Activated naive CD8-positive, alpha-beta T cell treated with anti-CD3 and anti-CD28 coated beads, Interleukin-2, amount 10 ng/mL, durations not matched to agents 7 days and 5 days (primary cell): ENCODE measurements at regions of chr6 and their contacts with region 1.

Region 1: GRCh38 chr6:33547499-33547898 is 32.6 kb downstream of the BAK1 start:
- DNase-seq: no peak
- ATAC-seq: no peak
- H3K4me3 Mint-ChIP-seq: peak overlapping the region; percentile 34
- H3K27ac Mint-ChIP-seq: peak overlapping the region; percentile 79
- H3K4me1 Mint-ChIP-seq: peaks cover 21% of the 10 kb centered on the region
- H3K27me3 Mint-ChIP-seq: no peaks in the 10 kb centered on the region

Region 2: DNA sequence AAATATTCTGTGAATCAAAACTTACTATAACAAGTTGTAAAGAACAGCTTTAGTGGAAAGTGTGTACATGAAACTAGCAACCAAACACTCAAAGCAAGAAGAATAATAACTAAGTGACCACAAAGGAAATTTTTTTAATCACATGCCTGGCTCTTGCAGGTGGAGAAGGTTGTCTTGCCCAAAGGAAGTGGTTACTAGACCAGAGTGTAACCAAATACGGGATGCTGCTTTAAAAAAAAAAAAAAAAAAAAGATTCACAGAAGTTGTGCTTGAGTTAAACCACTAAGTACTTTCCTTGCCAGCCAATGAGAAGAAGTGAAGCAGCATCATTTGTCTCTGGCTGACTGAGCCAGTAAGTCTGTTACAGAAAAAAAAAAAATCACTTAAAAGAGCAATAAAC is 861.9 kb before region 1 on chr6:
- POLR2A ChIA-PET with region 1: no interaction called
- DNase-seq: no peak
- ATAC-seq: peak; percentile 95
- H3K4me3 Mint-ChIP-seq: peak overlapping the region; percentile 55
- H3K27ac Mint-ChIP-seq: peak overlapping the region; percentile 46
- H3K4me1 Mint-ChIP-seq: peaks cover 20% of the 10 kb centered on the region
- H3K27me3 Mint-ChIP-seq: peaks cover 12% of the 10 kb centered on the region

Region 3: GRCh38 chr6:33508935-33509926 is 38.3 kb before region 1 on chr6:
- POLR2A ChIA-PET with region 1: no interaction called
- DNase-seq: no peak
- ATAC-seq: no peak
- H3K4me3 Mint-ChIP-seq: no peak overlapping the region
- H3K27ac Mint-ChIP-seq: no peak overlapping the region
- H3K4me1 Mint-ChIP-seq: peaks cover 5% of the 10 kb centered on the region
- H3K27me3 Mint-ChIP-seq: peaks cover 18% of the 10 kb centered on the region

Region 4: DNA sequence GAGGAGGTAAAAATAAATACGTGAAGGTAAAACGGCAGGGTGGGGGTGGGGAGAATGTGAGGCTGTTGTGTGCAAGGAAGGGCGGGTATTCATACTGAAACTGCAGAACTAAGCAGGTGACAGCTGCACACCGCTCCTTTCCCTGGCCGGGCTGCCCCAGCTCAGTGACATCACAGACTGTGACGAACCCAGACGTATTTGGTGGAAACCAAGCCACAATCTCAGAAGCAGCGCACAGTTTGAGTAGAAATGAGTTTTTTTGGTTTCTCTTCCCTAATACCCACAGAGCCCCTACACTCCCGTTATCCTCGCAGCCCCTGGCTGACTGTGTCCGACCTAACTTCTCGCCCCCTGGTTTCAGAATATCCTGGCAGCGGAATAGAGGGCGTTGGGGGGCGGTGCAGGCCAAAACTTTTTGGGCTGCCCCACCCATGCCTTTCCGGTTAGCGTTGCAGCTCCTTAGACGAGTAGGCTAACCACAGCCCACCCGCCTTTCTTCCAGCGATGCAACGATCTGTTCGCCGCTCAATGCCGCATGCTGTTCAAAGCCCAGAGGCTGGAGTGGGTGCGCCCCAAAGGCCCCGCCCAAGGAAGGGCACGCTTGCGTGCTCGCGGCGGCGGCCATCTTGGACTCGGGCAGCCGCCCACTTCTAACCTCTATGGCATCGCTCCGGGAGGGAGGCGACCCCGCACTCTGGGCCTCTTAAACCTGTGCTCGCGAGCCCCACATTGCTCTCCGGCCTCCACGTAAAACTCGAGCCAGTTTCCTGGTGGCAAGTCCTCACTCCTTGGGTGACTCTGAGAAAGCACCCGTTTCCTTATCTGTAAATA is 23.5 kb after region 1 on chr6:
- POLR2A ChIA-PET with region 1: interaction called, 18 read pairs
- DNase-seq: peak; percentile 93
- ATAC-seq: peak; percentile 91
- H3K4me3 Mint-ChIP-seq: peak overlapping the region; percentile 90
- H3K27ac Mint-ChIP-seq: peak overlapping the region; percentile 99
- H3K4me1 Mint-ChIP-seq: peaks cover 28% of the 10 kb centered on the region
- H3K27me3 Mint-ChIP-seq: no peaks in the 10 kb centered on the region

Region 5: GRCh38 chr6:33579828-33580714 is 32.6 kb after region 1 on chr6 and contains the start of gene BAK1:
- POLR2A ChIA-PET with region 1: interaction called, 10 read pairs
- DNase-seq: peak; percentile 81
- ATAC-seq: peak; percentile 94
- H3K4me3 Mint-ChIP-seq: peak within 1 kb of the TSS; percentile 99
- H3K27ac Mint-ChIP-seq: peak within 1 kb of the TSS; percentile 99
- H3K4me1 Mint-ChIP-seq: peaks cover 29% of the 10 kb centered on the region
- H3K27me3 Mint-ChIP-seq: no peaks in the 10 kb centered on the region
- total RNA-seq, gene BAK1: 48.0 to 48.1 TPM